ENCODE measurements at regions of chr20 and their contacts with region 1.

Region 1: DNA sequence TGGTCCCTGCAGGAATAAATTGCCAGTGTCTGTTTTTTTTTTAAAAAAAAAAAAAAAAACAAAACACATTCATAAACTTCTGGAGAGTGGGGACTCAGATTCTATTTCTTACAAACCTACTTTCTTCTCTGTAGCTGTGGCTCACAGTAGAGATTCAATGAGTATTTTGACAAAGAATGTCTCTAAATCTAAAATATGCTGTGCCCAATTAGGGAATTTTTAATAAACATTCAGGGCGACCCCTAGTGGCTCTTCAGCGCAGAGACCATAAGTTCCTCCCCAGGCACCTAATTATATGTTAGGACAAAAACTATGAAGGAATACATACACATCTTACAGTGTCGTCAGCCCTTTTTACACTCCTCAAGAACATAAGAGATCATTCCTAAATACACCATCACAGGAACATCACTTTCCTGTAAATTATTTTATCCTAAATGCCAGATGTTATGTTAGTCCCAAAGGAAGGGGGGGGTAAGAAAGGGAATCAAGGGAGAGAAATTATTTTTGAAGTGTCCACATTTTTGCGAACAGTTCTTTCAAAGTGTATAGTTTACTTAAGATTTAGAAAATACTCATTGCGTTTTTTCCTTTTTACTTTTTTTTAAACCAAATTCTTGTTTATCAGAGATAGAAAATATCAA is 21.8 kb upstream of the NAA20 start:
- DNase-seq: no peak

Region 2: DNA sequence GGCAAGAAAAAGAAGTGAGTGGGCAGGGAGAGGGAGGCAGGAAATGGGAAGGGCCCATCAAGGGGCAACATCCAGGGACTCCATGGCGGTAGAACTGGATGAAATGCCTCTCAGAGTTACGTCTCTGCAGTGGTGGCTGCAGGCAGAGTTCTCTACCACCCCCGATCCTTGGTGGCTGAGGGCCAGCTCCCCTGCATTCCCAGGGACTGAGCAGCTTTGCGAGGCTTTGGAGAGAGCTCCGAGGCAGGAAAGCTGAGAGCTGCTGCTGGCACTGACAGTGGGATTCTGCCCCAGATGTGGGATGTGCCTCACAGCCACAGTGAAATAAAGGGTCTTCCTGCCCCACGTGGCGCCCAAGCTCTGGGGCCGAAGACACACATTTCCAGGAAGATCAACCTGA is 546.3 kb before region 1 on chr20:
- in situ Hi-C with region 1: no loop called
- DNase-seq: no peak

Region 3: GRCh38 chr20:19784511-19785172 is 210.7 kb before region 1 on chr20:
- in situ Hi-C with region 1: loop called (anchors 25 kb)
- DNase-seq: peak; percentile 95

Region 4: DNA sequence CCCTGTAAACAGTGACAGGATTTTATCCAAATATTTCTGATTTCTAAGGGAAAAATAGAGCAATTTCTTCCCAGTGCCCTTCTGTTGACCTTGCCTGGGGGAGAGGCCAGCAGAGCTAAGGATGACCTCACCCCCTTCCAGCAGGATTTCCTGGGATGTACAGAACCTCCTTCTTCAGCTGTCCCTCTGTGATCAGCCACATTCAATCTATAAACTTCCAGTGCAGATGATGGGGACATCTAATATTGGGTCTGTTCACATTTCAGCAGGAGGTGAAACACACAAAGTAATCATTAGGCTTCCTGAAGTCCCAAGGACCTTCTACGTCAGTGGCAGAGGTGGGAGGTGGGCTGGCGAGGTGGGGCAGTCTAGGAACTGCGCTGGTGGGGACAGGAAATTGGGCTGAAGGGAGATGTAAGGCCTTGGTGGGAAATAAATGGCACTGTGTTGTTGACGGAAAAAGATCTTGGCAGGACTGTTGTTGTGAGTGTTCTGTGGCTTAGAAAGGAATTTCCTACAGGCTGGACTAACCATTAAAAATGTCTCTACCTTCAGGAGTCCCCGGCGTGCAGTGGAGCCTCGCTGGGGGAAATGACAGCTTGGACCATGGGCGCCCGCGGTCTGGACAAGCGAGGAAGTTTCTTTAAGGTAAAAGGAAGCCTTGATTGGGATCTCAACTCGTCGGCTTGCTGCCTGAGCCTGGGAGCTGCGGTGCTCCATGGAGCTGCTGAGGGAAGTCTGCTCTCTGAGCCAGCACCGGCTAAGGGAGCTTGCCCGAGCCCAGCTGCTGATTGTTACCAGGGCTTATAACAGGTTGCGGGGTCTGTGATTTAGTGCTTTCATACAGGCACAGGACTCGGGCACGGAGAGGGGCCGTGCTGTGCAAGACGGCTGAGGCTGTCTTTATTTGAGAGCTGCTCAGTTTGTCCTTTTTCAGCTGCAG is 106.1 kb before region 1 on chr20:
- in situ Hi-C with region 1: loop called (anchors 25 kb)
- DNase-seq: peak; percentile 63

Region 5: GRCh38 chr20:20052074-20052970 is 57.0 kb after region 1 on chr20 and contains the starts of genes CFAP61 and CRNKL1:
- in situ Hi-C with region 1: no loop called
- DNase-seq: peak; percentile 98
- total RNA-seq, gene CFAP61: 0.07 and 0.14 TPM in 2 replicates
- total RNA-seq, gene CRNKL1: 18.1 and 20.1 TPM in 2 replicates

Measured in Caki2 (cell line).